Mammary epithelial cell (primary cell): ENCODE measurements at regions of chr1 and their contacts with region 1.

Region 1: DNA sequence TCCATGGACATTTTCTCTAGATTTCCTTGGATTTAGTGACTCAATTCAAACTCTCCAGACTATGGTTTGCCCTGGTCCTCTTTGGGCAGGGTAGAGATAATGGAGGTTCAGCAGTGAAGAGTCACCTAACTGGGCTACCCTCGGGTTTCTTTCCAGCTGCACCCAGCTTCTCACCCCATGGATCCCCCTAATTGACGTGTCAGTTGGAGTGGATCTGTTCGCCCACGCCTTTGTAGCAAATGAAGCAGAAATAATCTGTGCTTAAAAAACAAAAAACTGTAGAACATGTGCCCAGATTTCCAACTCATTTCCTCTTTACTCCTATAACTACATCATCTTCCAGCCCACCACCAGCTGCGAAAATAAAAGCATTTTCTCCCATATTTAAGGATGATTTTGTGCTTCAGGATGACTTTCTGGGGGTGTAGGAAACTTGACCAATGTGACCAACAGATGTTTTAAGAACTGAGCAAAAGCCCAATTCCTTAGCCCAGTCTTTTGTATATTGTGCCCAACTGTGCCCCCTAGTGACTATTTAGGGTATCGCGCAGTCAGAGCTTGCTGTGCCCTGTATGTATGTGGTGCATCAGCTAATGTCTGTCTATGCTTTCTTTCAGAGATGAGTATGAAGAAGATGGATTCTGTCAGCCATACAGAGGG is 66.5 kb upstream of the UBE2U start:
- DNase-seq: peak; percentile 74
- H3K4me3 ChIP-seq: no peak overlapping the region
- H3K27ac ChIP-seq: peak overlapping the region; percentile 25
- H3K4me1 ChIP-seq: peaks cover 33% of the 10 kb centered on the region
- H3K27me3 ChIP-seq: no peaks in the 10 kb centered on the region
- CTCF ChIP-seq: peak; percentile 90 to 92

Region 2: DNA sequence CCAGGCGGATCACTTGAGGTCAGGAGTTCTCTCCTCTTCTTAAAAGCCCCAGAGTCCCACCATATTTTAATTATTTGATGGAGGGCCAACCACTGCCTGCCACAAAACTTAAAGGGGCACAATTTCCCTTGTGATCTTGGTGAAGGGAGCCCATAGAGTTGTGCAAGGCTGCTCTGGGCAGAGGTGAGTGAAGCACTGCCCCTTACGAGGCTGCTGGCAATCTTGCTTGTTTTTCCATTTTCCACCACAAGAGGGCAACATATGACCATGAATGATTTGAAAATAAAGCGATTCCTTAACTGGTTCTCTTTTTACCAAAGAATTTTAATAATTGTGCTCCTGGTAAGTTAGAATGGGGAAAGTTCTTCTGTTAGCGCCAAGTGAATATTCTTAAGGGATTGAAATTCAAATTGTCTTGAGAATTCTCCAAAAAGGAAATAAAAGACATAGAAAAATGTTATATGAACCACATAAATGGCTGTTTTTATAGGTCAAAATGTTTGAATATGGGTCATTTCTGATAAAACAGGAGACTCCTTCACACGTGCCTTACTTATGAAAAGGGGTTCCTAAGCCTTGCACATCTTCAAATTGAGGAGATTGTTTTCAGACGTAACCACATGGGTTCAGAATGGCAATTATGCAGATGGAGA is 521.0 kb before region 1 on chr1:
- CTCF ChIA-PET with region 1: no interaction called
- dilution Hi-C with region 1: no loop called
- in situ Hi-C with region 1: loop called (anchors 10 kb)
- intact Hi-C with region 1: loop called (anchors 1 kb)
- DNase-seq: peak; percentile 58
- H3K4me3 ChIP-seq: no peak overlapping the region
- H3K27ac ChIP-seq: no peak overlapping the region
- H3K4me1 ChIP-seq: peaks cover 4% of the 10 kb centered on the region
- H3K27me3 ChIP-seq: no peaks in the 10 kb centered on the region
- CTCF ChIP-seq: peak; percentile 60 to 75

Region 3: GRCh38 chr1:63691701-63692425 is 445.0 kb before region 1 on chr1:
- CTCF ChIA-PET with region 1: interaction called, 18 read pairs
- dilution Hi-C with region 1: no loop called
- in situ Hi-C with region 1: no loop called
- intact Hi-C with region 1: loop called (anchors 1 kb)
- DNase-seq: peak; percentile 68
- H3K4me3 ChIP-seq: no peak overlapping the region
- H3K27ac ChIP-seq: no peak overlapping the region
- H3K4me1 ChIP-seq: no peaks in the 10 kb centered on the region
- H3K27me3 ChIP-seq: no peaks in the 10 kb centered on the region
- CTCF ChIP-seq: peak; percentile 83 to 86

Region 4: DNA sequence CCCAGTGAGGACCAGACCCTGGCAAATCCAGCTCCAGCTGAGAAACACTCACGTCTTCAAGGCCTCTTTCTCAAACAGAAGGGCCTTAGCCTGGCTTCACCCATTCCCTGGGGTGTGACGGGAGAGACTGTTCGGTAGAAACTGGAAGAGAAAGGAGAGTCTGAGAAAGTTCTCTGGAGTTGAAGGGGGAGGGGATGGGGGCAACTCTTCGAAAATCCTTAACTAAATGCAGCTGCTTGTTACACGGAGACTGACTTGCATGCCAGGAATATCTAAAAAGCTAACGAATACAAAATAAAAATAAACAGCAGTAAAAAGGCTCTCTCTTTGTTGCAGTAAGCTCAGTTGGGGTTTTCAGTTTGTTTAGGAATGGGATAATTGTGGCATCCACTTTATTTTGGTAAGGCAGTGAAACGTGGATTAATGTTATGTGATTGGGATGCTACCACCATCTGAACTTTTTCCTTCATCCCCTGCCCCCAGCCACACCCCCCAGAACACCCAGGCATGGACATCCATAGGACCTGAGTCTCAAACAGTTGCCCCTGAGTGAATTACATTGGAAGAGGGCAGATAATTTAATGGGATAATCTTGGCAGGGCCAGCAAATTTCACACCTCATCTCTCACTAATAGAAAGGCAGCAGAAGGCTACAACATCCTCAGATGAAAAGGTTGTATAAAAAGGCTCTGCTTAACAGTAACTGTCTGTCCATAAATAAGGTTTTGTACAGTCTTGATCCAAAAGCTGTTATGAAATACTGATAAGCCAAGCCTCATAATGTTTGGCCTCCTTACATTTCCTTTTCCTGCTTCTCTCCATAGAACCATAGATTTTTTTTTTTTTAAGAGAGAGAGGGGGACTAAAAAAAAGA is 357.3 kb before region 1 on chr1:
- CTCF ChIA-PET with region 1: no interaction called
- dilution Hi-C with region 1: no loop called
- in situ Hi-C with region 1: loop called (anchors 5 kb)
- intact Hi-C with region 1: loop called (anchors 1 kb)
- DNase-seq: no peak
- H3K4me3 ChIP-seq: no peak overlapping the region
- H3K27ac ChIP-seq: no peak overlapping the region
- H3K4me1 ChIP-seq: peaks cover 10% of the 10 kb centered on the region
- H3K27me3 ChIP-seq: no peaks in the 10 kb centered on the region
- CTCF ChIP-seq: no peak

Region 5: GRCh38 chr1:63935143-63935542 is 201.7 kb before region 1 on chr1:
- CTCF ChIA-PET with region 1: interaction called, 6 read pairs
- dilution Hi-C with region 1: no loop called
- in situ Hi-C with region 1: loop called (anchors 5 to 10 kb)
- intact Hi-C with region 1: loop called (anchors 1 kb)
- DNase-seq: peak; percentile 40
- H3K4me3 ChIP-seq: no peak overlapping the region
- H3K27ac ChIP-seq: no peak overlapping the region
- H3K4me1 ChIP-seq: no peaks in the 10 kb centered on the region
- H3K27me3 ChIP-seq: no peaks in the 10 kb centered on the region
- CTCF ChIP-seq: peak; percentile 36 to 81

Region 6: GRCh38 chr1:64038965-64039926 is 97.6 kb before region 1 on chr1:
- CTCF ChIA-PET with region 1: no interaction called
- dilution Hi-C with region 1: no loop called
- in situ Hi-C with region 1: no loop called
- intact Hi-C with region 1: loop called (anchors 1 kb)
- DNase-seq: peak; percentile 100
- H3K4me3 ChIP-seq: no peak overlapping the region
- H3K27ac ChIP-seq: peak overlapping the region; percentile 78
- H3K4me1 ChIP-seq: peaks cover 57% of the 10 kb centered on the region
- H3K27me3 ChIP-seq: no peaks in the 10 kb centered on the region
- CTCF ChIP-seq: no peak